Left cardiac atrium (tissue), 4 donors: ENCODE measurements at regions of chr22 and their contacts with region 1.

Region 1: DNA sequence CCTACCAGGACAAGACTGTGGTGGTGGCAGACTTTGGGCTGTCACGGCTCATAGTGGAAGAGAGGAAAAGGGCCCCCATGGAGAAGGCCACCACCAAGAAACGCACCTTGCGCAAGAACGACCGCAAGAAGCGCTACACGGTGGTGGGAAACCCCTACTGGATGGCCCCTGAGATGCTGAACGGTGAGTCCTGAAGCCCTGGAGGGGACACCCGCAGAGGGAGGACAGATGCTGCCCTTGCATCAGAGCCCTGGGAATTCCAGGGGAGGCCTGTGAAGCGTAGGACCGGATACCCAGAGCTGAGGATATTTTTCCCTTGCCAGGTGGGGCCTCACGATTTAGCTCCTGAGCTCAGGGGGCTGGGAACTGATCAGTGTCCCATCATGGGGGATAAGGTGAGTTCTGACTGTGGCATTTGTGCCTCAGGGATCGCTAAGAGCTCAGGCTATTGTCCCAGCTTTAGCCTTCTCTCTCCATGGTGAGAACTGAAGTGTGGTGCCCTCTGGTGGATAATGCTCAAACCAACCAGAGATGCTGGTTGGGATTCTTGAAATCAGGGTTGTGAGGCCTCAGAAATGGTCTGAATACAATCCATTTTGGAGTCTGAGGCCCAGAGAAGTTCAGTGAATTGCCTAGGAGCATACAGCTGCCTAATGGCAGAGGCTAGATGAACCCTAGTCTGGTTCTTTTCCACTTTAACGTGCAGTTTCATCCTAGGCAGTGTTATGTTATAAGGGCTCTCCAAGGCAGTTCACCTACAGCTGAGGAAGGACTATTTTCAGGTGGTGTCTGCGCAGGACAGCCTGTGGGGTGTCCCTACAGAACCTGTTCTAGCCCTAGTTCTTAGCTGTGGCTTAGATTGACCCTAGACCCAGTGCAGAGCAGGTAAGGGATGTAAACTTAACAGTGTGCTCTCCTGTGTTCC is 19.5 kb downstream of the PIK3IP1 start:
- DNase-seq: peak; percentile 50
- ATAC-seq: peak; percentile 73 to 80

Region 2: GRCh38 chr22:31211862-31212730 is 60.7 kb before region 1 on chr22 and contains the start of gene LIMK2:
- intact Hi-C with region 1: loop called in 1 of 2 experiments (anchors 10 kb)
- DNase-seq: peak; percentile 97
- ATAC-seq: peak; percentile 97 to 98
- total RNA-seq, gene LIMK2: 10.2 to 18.5 TPM

Region 3: DNA sequence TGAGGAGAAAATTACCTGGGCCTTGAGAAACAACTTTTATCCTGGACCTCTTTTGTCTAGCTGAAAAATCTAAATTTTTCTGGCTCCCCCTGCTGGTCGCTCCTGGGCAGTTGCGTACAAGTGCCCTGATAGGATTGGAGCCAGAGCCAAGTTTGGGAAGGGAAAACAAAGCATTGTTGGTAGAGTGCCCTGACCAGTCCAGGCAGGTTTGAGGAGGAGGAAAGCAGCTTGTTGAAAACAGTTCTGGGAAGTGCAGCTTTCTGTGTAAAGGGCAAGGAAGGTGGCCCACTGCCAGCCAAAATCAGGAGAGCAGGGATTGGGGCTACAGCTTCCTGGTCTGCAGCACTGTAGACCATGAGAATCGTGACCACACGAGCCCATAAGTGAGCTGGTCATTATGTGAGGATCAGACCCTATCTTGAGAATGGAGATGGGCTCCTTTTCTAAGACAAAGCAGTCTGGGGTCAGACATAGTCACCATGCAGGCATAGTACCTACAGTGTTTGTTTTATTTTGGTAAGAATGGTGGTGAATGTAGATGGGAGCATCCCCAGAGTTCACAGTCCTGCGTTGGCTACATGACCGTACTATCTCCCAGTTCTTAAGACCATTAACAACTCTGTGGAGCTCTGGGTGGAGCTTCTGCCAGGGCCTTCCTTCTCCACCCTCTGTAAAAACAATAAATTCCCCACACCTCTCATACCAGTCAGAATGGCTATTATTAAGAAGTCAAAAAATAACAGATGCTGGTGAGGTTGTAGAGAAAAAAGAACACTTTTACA is 40.8 kb after region 1 on chr22:
- intact Hi-C with region 1: no loop called
- DNase-seq: peak; percentile 65
- ATAC-seq: peak; percentile 95 to 96

Region 4: GRCh38 chr22:31569126-31569525 is 296.3 kb after region 1 on chr22:
- intact Hi-C with region 1: no loop called
- DNase-seq: no peak
- ATAC-seq: no peak